Activated naive CD4-positive, alpha-beta T cell treated with anti-CD3 and anti-CD28 coated beads for 36 hours (primary cell): ENCODE measurements at regions of chr1 and their contacts with region 1.

Region 1: DNA sequence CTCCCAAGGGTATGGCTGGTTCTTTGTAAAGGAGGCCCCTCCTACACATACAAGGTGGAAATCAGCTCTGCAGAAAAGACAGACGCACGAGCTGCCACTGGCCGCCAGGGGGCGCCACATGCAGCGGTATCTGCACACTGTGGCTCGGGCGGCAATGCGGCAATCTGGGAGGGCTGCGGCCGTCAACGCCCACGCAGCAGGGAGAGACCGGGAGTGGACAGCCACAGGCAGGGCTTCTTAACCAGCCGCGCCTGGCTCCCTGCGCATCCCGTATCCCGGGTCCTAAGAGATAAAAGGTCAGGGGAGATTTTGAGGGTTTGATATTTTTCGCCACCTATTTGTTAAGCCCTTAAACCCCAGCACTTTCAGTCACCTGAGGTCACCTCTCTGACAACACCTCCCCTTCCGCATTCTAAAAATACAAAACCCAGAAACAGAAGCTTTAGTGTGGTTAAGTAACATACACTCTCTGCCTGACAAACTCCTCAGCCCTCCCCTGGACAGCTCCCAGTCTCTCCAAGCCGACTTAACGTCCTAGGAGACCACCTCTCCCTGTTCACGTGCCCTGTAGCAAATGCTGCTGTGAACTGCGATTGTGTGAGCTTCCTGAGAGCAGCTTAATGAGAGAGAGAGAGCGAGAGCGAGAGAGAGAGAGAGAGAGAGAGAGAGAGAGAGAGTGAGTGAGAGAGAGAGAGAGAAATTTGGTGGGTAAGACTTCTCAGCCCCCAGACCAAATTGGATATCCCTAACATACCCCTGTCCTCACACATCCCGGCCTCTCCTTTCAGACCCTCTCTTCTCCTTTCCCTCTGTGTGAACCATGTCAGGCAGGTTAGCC is 13.5 kb upstream of the KCNA2 start:
- DNase-seq: peak; percentile 89
- H3K4me3 Mint-ChIP-seq: peak overlapping the region; percentile 72
- H3K27ac Mint-ChIP-seq: no peak overlapping the region
- H3K4me1 Mint-ChIP-seq: peaks cover 23% of the 10 kb centered on the region
- H3K27me3 Mint-ChIP-seq: no peaks in the 10 kb centered on the region

Region 2: GRCh38 chr1:110524311-110525251 is 95.0 kb before region 1 on chr1:
- CTCF ChIA-PET with region 1: interaction called, 44 read pairs
- intact Hi-C with region 1: loop called (anchors 1 kb)
- DNase-seq: peak; percentile 70
- H3K4me3 Mint-ChIP-seq: no peak overlapping the region
- H3K27ac Mint-ChIP-seq: no peak overlapping the region
- H3K4me1 Mint-ChIP-seq: no peaks in the 10 kb centered on the region
- H3K27me3 Mint-ChIP-seq: peaks cover 12% of the 10 kb centered on the region

Region 3: GRCh38 chr1:110630839-110631663 is 11.4 kb after region 1 on chr1:
- CTCF ChIA-PET with region 1: interaction called, 37 read pairs
- intact Hi-C with region 1: loop called (anchors 1 kb)
- DNase-seq: peak; percentile 92
- H3K4me3 Mint-ChIP-seq: no peak overlapping the region
- H3K27ac Mint-ChIP-seq: no peak overlapping the region
- H3K4me1 Mint-ChIP-seq: peaks cover 54% of the 10 kb centered on the region
- H3K27me3 Mint-ChIP-seq: no peaks in the 10 kb centered on the region

Region 4: DNA sequence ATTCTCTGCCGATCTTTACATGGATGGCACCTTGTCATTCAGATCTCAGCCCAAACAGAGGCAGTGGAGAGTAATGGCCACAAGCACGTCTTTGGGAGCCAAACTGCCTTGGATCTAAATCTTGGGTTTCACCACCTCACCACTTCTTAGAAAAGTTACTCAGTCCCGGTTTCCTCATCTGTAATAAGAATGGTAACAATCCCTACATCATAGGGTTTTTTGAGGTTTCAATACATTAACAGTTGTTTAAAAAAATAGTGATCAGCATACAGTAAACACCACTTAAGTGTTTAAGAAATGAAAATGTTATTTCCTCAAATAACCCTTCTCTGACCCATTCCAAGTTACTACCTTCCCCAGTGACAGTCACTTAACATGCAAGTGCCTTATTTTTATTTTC is 93.6 kb after region 1 on chr1:
- CTCF ChIA-PET with region 1: interaction called, 10 read pairs
- intact Hi-C with region 1: no loop called
- DNase-seq: no peak
- H3K4me3 Mint-ChIP-seq: no peak overlapping the region
- H3K27ac Mint-ChIP-seq: no peak overlapping the region
- H3K4me1 Mint-ChIP-seq: peaks cover 9% of the 10 kb centered on the region
- H3K27me3 Mint-ChIP-seq: no peaks in the 10 kb centered on the region

Region 5: DNA sequence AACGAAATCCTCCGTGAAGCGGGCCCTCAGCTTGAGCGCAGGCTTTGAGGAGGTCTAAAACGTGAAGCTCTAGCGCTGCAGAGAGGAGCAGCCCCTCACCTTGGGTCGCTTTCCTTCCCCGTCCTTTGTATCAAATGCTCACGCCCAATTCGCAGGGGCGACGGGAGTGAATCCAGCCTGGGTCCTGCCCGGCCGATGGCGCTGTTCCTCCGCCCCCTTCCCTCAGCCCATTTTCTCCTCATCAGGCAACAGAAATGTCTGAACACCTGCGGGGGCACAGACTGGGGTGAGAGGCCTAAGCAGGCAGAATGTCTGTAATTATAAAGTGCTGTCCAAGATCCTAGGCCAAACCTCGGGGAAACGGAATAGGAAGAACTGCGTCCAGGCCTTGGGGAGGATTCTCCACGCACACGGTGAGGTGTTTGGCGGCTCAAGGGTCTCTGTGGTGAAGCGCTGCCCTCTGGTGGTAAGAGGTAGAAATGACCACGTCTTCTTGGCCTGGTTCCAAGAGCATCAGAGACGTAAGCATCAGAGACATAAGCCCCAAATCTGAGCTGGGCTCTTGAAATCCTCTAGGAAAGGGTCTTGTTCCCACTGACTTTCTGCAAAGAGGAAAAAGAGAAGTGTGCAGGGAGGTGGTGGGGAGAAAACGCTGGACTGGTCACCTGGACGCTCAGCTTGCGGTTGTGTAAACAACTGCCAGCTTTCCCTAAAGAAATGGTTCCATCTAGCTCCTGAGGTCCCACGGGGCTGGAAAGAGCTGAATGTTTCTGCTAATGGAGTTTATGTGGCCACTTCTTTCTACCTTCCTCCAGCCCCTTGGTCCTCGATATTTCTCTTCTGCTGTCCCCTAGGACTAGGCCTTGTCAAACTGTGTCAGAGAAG is 161.2 kb after region 1 on chr1:
- CTCF ChIA-PET with region 1: interaction called, 194 read pairs
- intact Hi-C with region 1: loop called (anchors 1 kb)
- DNase-seq: peak; percentile 89
- H3K4me3 Mint-ChIP-seq: peak overlapping the region; percentile 27
- H3K27ac Mint-ChIP-seq: no peak overlapping the region
- H3K4me1 Mint-ChIP-seq: peaks cover 24% of the 10 kb centered on the region
- H3K27me3 Mint-ChIP-seq: no peaks in the 10 kb centered on the region